ENCODE measurements at regions of chr3 and their contacts with region 1.

Region 1: DNA sequence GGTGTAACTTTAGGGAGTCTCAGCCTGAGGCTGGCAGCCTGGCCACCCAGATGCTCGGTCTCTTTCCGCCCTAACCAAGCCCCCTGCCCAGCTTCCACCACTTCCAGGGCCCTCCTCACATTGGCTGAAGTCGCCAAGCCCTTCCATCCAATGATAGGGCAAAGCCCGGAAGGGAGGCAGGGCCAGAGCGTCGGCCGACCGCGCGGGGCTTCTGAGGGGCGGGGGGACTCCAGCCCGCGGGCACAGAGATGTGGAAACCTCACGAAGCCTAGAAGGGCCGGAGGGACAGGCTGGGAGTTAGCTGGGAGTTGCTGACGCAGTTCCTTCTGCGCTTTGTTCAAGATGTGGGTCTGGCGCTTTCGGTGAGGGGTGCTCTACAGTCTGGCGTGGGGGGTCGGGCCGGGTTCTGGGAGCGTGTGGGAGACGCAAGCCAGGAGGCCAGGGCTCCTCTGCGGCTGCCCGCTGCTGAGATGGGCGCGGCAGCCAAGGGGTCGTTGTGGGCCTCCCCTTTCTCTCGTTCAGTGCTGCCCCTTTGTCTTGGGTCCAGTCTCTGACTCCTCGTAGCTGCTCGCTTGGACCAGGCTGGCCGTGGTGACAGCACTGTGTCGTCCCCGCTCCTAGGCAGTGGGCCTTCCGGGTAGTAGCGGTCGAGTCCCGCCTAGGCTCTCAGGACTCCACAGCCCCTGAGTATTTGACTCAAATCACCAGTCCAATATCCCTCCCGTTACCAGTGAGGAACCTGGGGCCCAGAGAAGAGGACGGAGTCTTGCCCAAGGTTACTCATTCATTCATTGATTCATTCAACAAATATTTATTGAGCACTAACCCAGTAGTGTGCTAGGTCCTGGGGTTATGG is at the start of gene ZNF660:
- DNase-seq: peak; percentile 81 to 84
- H3K4me3 ChIP-seq: peak within 1 kb of the TSS; percentile 75 to 92 (median 83)
- H3K27ac ChIP-seq: peak within 1 kb of the TSS; percentile 77
- H3K4me1 ChIP-seq: peaks cover 0 to 3% (median 0%) of the 10 kb centered on the region in 4 experiments; a peak in 3 of 7 replicates
- H3K27me3 ChIP-seq: no peaks in the 10 kb centered on the region
- CTCF ChIP-seq: no peak
- EP300 ChIP-seq: 0 out of 3 replicates have a peak, but pooled peaks of 1 of the 2 experiments have one; percentile 20
- POLR2A ChIP-seq: peak; percentile 94 to 97
- RAD21 ChIP-seq: no peak
- total RNA-seq, gene ZNF660: 11.7 and 13.0 TPM in 2 replicates

Region 2: DNA sequence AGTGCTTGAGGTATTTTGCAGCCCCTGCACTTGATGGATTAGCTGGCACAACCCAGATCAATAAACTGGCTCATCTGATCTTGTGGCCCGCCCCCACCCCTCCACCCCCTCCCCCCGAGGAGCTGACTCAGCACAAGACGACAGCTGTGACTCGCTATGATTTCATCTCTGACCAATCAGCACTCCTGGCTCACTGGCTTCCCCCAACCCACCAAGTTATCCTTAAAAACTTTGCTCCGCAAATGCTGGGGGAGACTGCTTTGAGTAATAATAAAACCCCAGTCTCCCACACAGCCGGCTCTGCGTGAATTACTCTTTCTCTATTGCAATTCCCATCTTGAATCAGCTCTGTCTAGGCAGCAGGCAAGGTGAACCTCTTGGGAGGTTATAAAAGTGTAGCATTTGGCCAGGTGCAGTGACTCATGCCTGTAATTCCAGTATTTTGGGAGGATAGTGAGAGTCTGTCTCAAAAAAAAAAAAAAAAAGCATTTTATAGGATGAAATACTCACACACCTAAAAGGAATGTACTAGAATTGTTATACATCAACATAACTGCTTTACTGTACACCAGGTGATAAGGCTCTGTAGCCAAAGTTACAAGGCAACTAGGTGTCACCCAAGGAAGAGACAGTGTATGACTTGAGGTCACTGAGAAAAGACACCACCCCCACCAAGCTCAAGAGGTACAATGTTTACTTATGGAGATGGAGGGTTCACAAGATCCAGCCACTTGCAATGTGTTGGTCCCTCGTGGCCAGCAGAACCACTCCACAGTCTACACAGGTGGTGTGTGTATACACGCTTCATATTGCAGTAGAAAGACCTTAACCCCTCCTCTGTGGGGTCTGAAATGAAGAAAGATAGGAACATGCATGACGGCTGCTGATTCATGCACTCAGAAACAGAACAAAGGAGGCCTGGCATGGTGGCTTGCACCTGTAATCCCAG is 116.0 kb before region 1 on chr3:
- CTCF ChIA-PET with region 1: no interaction called
- POLR2A ChIA-PET with region 1: no interaction called
- DNase-seq: peak in 1 of 2 experiments; percentile 47
- H3K4me3 ChIP-seq: no peak overlapping the region
- H3K27ac ChIP-seq: peak overlapping the region; percentile 67; the same call in 1 of the 2 replicates
- H3K4me1 ChIP-seq: peaks cover 3 to 9% (median 6%) of the 10 kb centered on the region in 4 experiments; a peak in 4 of 7 replicates
- H3K27me3 ChIP-seq: no peaks in the 10 kb centered on the region
- CTCF ChIP-seq: no peak
- EP300 ChIP-seq: no peak
- POLR2A ChIP-seq: no peak
- RAD21 ChIP-seq: no peak

Region 3: DNA sequence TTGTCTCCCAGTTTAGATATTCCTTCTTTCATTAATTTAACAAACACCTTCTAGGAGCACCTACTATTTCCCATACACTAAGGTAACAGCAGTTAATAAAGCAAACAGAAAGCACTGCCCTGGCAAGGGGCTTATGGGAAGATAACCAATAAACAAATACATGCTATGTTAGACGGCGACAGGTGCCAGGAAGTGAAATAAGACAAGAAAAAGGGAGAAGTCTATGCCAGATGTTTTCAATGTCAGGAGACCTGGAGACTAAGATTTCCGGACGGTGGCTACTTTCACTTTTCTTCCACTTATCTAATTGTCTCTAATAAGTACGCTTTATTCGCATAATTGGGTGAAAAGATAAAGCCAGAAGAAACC is 74.9 kb before region 1 on chr3:
- CTCF ChIA-PET with region 1: no interaction called
- POLR2A ChIA-PET with region 1: interaction called, 20 read pairs
- DNase-seq: no peak
- H3K4me3 ChIP-seq: peak overlapping the region; percentile 56 to 96 (median 82)
- H3K27ac ChIP-seq: no peak overlapping the region
- H3K4me1 ChIP-seq: peaks cover 2 to 8% (median 4%) of the 10 kb centered on the region in 4 experiments; a peak in 4 of 7 replicates
- H3K27me3 ChIP-seq: no peaks in the 10 kb centered on the region
- CTCF ChIP-seq: no peak
- EP300 ChIP-seq: no peak
- POLR2A ChIP-seq: peak in 1 of 2 experiments; percentile 7; a peak in 1 of 3 replicates
- RAD21 ChIP-seq: no peak

Region 4: DNA sequence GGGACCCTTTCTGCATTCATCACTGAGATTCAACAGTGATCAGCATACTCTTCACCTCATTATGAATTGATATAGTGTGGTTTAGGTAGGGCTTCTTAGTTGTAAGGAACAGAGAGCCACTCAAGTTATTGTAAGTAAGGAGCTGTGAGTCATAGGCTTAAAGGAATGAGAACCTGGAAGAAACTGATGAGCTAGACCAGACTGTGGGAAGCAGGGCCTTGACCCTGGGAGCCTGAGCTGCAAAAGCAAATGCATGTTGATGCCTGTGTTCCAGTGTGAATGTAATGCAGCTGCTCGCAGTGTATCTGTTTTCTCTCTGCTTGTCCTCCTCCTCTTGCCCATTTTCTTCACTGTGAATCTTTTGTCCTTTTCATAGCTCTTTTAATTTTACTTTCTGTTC is 16.3 kb before region 1 on chr3:
- CTCF ChIA-PET with region 1: interaction called, 3 read pairs
- POLR2A ChIA-PET with region 1: interaction called, 11 read pairs
- DNase-seq: no peak
- H3K4me3 ChIP-seq: no peak overlapping the region
- H3K27ac ChIP-seq: no peak overlapping the region
- H3K4me1 ChIP-seq: no peaks in the 10 kb centered on the region
- H3K27me3 ChIP-seq: no peaks in the 10 kb centered on the region
- CTCF ChIP-seq: no peak
- EP300 ChIP-seq: no peak
- POLR2A ChIP-seq: no peak
- RAD21 ChIP-seq: no peak

Region 5: GRCh38 chr3:44761424-44762169 is 176.7 kb after region 1 on chr3 and contains the starts of genes KIAA1143 and KIF15:
- CTCF ChIA-PET with region 1: no interaction called
- POLR2A ChIA-PET with region 1: interaction called, 11 read pairs
- DNase-seq: peak; percentile 91 to 98
- H3K4me3 ChIP-seq: peak within 1 kb of the TSS; percentile 89 to 97 (median 92)
- H3K27ac ChIP-seq: peak within 1 kb of the TSS; percentile 92
- H3K4me1 ChIP-seq: no peaks in the 10 kb centered on the region; a peak in 1 of 7 replicates
- H3K27me3 ChIP-seq: no peaks in the 10 kb centered on the region
- CTCF ChIP-seq: no peak; a peak in 1 of 4 replicates
- EP300 ChIP-seq: 0 out of 3 replicates have a peak, but pooled peaks of 1 of the 2 experiments have one; percentile 24
- POLR2A ChIP-seq: peak; percentile 95 to 98
- RAD21 ChIP-seq: no peak; a peak in 1 of 4 replicates
- total RNA-seq, gene KIAA1143: 65.1 and 67.2 TPM in 2 replicates
- total RNA-seq, gene KIF15: 25.5 and 26.4 TPM in 2 replicates